ENCODE measurements at regions of chr11 and their contacts with region 1.

Region 1: DNA sequence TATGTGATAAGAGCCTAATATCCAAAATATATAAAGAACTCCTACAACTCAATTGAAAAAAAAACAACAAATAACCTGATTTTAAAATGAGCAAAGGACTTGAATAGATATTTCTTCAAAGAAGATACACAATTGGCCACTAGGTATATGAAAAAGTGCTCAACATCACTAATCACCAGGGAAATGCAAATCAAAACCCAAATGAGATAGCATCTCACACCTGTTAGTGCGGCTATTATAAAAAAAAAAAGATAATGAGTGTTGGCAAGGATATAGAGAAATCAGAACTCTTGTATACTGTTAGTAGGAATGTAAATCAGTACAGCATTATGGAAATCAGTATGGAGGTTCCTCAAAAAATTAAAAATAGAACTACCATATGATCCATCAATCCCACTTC is 5.9 kb upstream of the SIK2 start:
- DNase-seq: no peak
- H3K4me3 ChIP-seq: no peak overlapping the region
- H3K27ac ChIP-seq: no peak overlapping the region
- H3K4me1 ChIP-seq: peaks cover 4% of the 10 kb centered on the region
- H3K27me3 ChIP-seq: no peaks in the 10 kb centered on the region
- CTCF ChIP-seq: no peak
- POLR2A ChIP-seq: no peak

Region 2: GRCh38 chr11:111652184-111652583 is 55.9 kb after region 1 on chr11:
- intact Hi-C with region 1: no loop called
- DNase-seq: no peak
- H3K4me3 ChIP-seq: no peak overlapping the region
- H3K27ac ChIP-seq: no peak overlapping the region
- H3K4me1 ChIP-seq: no peaks in the 10 kb centered on the region
- H3K27me3 ChIP-seq: no peaks in the 10 kb centered on the region
- CTCF ChIP-seq: no peak
- POLR2A ChIP-seq: no peak

Region 3: DNA sequence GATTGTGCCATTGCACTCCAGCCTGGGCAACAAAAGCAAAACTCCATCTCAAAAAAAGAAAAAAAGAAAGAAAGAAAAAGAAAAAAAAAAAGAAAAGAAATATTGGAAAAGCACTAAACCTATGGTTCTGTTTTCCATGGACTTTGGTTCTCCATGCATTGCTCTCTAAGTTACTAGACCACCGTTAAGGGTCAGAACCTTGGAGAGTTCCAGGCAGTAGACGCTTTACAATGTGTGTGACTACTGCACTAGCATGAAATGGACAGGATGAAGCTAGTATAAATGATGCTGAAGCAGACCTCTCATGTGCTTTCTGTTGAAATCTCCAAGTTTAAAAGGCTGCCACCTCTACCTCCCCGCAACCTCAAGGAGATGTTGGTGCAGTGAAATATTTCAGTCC is 69.5 kb after region 1 on chr11:
- intact Hi-C with region 1: no loop called
- DNase-seq: no peak
- H3K4me3 ChIP-seq: no peak overlapping the region
- H3K27ac ChIP-seq: no peak overlapping the region
- H3K4me1 ChIP-seq: peaks cover 9% of the 10 kb centered on the region
- H3K27me3 ChIP-seq: no peaks in the 10 kb centered on the region
- CTCF ChIP-seq: no peak
- POLR2A ChIP-seq: no peak

Region 4: DNA sequence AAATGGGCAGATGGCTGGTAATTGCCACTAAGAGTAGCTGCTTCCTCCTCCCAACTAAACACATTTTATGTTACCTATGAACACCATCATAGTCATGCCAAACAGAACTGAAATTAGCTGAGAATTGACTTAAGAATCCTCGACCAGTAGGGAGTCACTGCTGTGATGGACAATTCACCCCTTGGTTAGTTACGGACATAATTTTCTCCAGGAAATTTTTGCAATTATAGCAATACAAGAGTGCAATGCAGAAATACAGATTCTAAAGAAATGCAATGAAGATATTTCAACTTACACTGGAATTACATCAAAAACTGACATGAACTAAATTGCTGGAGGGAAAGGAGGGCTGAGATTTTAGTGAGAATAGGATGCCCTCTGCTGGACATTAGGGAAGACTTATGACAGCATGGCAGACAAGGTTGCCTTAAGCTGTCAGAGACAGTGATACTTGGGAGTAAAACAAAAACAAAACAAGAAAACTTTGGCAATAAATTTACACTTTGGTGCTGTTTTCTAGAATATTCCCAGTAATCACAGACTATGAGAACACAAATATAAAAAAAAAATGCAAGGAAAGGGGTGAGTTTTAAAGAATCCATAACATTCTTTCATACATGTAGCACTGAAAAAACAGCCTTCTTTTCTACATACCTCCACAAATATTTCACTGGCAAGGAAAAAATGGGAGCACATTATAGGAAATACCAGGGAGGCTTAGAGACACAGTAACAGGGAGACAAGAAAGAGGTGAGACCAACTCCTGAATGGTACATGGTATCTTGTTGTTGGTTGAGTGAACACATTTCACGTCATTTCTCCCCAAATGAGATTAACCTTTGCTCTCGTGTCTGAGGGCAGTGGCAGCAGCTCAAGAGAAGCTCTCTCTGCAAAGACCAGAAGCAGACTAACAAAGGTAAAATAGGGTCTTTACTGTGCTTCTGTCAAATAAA is 181.1 kb after region 1 on chr11:
- intact Hi-C with region 1: loop called (anchors 2 kb)
- DNase-seq: no peak
- H3K4me3 ChIP-seq: no peak overlapping the region
- H3K27ac ChIP-seq: no peak overlapping the region
- H3K4me1 ChIP-seq: no peaks in the 10 kb centered on the region
- H3K27me3 ChIP-seq: no peaks in the 10 kb centered on the region
- CTCF ChIP-seq: peak; percentile 51 to 90 (median 84)
- POLR2A ChIP-seq: no peak

Measured in vagina (tissue), 2 donors.